ENCODE measurements at regions of chrX and their contacts with region 1.

Region 1: DNA sequence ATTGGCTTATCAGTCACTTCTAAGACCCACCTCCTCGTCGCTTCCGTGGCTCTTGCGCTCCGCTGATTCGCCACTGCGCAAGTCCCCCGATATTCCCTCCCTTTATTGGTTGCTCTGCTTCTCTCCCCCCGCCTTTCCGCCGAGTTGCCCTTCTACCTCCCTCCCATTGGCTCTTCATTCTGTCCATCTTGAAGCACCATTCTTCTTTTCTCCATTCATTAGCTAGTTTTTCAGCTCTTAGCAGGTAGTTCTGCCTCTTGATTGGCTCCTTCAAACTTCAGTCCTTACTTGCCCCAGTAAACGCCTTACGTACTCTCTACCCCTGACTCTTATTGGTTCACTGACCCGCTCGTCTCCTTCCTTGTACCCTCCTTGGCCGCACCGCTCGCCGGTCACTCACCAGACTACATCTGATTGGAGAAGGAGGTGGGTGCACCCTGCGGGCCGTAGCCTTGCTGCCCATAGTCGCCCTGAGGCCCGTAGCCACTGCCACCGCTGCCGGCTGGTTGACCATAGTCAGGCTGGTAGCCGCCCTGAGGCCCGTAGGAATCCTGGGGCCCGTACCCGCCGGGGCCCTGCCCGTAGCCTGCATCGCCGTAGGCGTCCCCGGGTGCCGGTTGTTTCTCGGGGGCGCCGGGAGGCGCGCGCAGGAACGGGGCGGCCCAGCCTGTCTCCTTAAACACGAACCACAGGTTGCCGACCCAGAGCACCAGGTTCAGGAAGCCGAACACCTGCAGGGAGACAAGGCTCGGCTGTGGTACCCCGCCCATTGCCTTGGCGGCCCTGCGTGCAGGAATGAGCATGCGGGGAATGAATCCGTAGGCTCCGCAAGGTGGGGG is 5.1 kb upstream of the PRICKLE3 start:
- DNase-seq: peak; percentile 73
- ATAC-seq: peak; percentile 92
- H3K4me3 Mint-ChIP-seq: peak overlapping the region; percentile 95
- H3K27ac Mint-ChIP-seq: peak overlapping the region; percentile 96
- H3K4me1 Mint-ChIP-seq: peaks cover 30% of the 10 kb centered on the region
- H3K27me3 Mint-ChIP-seq: no peaks in the 10 kb centered on the region

Region 2: GRCh38 chrX:49155900-49156837 is 35.1 kb before region 1 on chrX:
- POLR2A ChIA-PET with region 1: no interaction called
- DNase-seq: peak; percentile 88
- ATAC-seq: peak; percentile 92
- H3K4me3 Mint-ChIP-seq: peak overlapping the region; percentile 94
- H3K27ac Mint-ChIP-seq: peak overlapping the region; percentile 97
- H3K4me1 Mint-ChIP-seq: peaks cover 17% of the 10 kb centered on the region
- H3K27me3 Mint-ChIP-seq: no peaks in the 10 kb centered on the region

Region 3: DNA sequence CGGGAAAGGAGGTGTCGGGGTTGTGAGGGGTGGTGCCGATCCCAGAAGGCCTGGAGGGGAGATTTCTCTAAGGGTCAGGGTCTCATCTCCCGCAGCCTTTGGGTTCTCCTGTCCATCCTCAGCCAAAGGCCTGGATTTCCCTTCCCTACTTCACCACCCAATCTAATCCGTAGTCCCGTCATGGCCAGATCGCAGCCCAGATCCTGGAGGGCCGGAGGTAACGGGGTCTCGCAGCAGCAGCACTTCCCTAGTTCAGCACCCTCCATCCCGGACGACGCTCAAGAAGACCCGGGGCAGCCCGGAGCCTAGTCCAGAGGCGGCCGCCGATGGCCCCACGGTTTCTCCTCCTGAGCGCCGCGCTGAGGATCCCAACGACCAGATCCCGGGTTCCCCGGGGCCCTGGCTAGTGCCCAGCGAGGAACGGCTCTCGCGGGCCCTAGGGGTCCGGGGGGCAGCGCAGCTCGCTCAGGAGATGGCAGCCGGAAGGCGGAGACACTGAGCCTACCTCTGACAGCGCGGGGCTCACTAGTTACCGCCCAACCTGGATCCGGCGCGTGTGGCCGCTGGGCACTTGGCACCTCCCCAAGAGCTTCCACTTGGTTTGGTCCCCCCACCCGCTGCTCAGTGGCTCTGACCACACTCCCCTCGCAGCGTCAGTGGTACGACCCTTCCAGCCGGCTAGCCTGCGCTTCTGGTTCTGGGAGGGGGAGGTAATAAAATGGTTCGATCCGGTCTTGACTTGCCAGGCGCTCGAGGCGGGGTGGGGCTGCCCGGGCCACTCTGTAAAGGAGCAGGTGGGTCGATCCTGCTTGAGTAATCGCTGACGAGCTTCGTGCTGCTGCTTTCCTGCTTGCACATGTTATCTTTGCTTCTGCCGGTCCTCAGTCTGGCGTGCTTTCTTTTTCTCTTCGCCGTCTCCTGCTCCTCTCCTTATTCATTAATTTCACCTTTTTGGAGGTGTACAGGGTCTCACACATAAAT is 25.1 kb before region 1 on chrX:
- POLR2A ChIA-PET with region 1: interaction called, 15 read pairs
- DNase-seq: peak; percentile 74
- ATAC-seq: peak; percentile 60
- H3K4me3 Mint-ChIP-seq: peak overlapping the region; percentile 89
- H3K27ac Mint-ChIP-seq: peak overlapping the region; percentile 96
- H3K4me1 Mint-ChIP-seq: peaks cover 30% of the 10 kb centered on the region
- H3K27me3 Mint-ChIP-seq: no peaks in the 10 kb centered on the region

Region 4: DNA sequence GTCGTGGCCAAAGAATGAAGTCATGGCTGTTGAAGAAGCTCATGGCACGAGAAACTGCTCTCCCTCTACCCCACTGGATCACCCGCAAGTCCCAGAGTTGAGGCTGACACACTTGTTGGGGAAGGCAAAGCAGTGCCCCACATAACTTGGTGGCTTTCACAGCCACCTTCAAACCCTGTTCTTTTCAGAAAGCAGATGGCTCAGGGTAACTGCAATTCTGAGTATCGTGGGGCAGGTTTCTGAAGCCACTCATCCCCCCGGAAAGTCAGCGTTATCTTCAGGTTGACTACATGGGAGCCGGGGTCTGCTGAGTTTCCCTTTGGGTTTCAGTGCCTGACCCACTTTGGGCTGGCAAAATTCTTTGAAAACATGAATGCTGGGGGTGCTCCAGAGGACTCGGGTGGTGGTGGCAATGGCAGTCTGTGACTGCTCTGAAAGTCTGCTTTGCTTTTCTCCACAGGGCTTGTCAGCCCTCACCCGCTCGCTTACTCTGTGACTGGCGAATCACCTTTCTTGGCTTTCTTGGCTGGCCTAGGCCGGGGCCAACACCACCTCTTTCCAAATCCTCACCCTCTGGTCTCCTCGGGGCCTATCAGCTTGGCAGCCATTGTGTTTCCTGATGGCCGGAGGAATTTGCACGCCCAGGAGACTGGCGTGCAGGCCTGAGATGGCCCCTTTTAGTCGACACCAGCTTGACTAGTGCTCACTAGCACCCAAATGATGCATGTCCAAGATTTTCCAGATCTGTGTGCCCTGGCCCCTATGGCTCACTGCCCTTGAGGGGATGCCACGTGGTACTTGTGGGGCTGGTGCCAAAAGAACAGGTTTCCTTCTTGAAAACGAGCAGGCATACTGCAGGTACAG is 85.7 kb after region 1 on chrX:
- POLR2A ChIA-PET with region 1: interaction called, 12 read pairs
- DNase-seq: peak; percentile 31
- ATAC-seq: no peak
- H3K4me3 Mint-ChIP-seq: peak overlapping the region; percentile 71
- H3K27ac Mint-ChIP-seq: peak overlapping the region; percentile 96
- H3K4me1 Mint-ChIP-seq: peaks cover 56% of the 10 kb centered on the region
- H3K27me3 Mint-ChIP-seq: no peaks in the 10 kb centered on the region